Common myeloid progenitor, CD34-positive (primary cell): ENCODE measurements at regions of chr16 and their contacts with region 1.

Region 1: DNA sequence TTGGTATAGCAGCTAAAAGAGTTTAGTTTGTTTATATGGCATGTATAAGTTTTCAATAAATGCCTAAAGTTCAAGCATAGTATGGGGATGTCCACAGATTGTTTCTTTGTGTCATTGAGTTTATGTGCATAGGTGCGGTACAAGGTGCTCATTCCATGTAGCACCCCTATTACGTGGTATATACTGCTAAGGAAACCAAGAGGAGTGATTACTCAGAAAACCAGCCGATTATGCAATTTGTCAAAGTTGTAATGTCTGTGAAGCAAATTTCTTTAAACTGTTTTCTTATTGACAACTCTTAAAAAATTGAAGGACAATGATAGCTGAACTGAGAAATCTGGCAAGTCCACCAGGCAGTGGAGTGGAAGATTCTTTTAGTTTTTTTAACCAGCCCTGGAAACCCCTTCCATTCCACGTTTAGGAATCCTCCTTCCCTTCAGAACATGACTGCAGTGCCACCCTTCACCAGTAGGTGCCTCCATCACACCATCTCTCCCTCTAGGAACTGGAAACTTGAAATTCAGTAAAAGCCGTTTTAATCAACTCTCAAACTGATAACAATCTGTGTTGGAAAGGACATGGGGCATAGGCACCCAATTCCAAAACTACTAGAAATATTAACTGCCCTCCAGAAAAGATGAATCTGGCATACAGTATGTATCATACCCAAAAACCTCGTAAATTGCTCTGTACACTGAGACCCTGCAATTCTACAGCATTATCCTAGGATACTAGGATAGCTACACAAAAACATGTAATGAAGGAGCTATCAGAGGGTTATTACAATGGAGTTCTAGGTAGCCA is 43.5 kb downstream of the REXO5 start:
- DNase-seq: peak; percentile 62 to 71 (median 63)
- H3K4me3 ChIP-seq: no peak overlapping the region
- H3K27ac ChIP-seq: no peak overlapping the region
- H3K4me1 ChIP-seq: peaks cover 8 to 71% (median 38%) of the 10 kb centered on the region in 4 experiments
- H3K27me3 ChIP-seq: no peaks in the 10 kb centered on the region

Region 2: DNA sequence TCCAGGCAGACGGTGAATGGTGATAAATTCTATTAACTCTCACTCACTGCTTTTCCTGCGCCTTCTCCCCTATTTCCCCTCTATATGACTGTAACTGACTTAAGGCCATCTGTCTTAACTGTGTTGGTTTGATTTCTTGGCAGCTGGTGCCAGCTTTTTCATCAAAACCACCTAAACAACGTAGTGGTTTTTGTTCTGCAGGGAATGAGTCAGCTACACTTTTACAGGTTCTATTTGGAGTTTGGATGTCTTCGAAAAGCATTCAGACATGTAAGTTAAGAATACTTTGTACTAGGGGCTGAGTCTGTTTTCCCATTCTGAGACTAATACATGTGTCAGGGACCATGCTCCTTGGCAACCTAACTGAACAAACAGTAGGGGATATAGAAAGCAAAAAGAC is 35.0 kb before region 1 on chr16:
- CTCF ChIA-PET with region 1: interaction called, 41 read pairs
- POLR2A ChIA-PET with region 1: no interaction called
- DNase-seq: peak; percentile 67 to 96 (median 94)
- H3K4me3 ChIP-seq: peak overlapping the region in 2 of 7 experiments; percentile 43
- H3K27ac ChIP-seq: peak overlapping the region in 1 of 2 experiments; percentile 23
- H3K4me1 ChIP-seq: peaks cover 8 to 58% (median 30%) of the 10 kb centered on the region in 4 experiments
- H3K27me3 ChIP-seq: no peaks in the 10 kb centered on the region

Region 3: DNA sequence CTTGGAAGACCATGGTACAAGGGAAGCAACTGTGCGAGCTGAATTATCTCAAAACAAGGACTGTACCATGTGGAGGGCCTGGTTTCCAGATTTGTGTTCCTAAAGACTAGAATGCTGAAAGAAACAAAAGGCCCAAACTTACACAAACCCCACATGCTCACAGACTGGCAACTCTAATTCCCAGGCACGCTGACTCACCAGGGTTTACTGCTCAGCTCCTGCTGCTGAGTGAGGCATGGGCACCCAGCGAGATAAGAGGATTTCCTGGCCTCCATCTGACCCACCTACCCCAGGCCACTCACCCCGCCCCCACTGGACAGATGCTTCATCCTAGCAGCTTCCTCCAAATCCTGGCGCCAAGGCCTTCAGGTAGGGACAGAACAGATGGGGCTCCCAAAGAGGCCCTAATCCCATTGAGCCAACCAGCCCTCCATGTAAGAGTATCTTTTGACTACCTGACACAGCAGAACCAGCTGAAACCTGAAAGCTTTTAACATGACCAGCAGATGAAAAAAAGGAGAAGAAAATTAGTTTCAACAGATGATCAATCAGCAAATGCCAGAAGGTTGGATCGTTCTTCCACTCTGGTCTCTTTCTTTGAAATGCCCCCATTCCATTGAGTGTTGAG is 16.5 kb after region 1 on chr16:
- CTCF ChIA-PET with region 1: interaction called, 14 read pairs
- POLR2A ChIA-PET with region 1: interaction called, 3 read pairs
- DNase-seq: peak in 2 of 3 donors; percentile 41 to 55
- H3K4me3 ChIP-seq: no peak overlapping the region
- H3K27ac ChIP-seq: no peak overlapping the region
- H3K4me1 ChIP-seq: peaks cover 0 to 47% (median 19%) of the 10 kb centered on the region in 4 experiments
- H3K27me3 ChIP-seq: no peaks in the 10 kb centered on the region

Region 4: GRCh38 chr16:20904507-20905079 is 54.8 kb after region 1 on chr16:
- CTCF ChIA-PET with region 1: interaction called, 14 read pairs
- POLR2A ChIA-PET with region 1: no interaction called
- DNase-seq: peak; percentile 93 to 96 (median 95)
- H3K4me3 ChIP-seq: peak overlapping the region in 4 of 7 experiments; percentile 2 to 93 (median 49)
- H3K27ac ChIP-seq: peak overlapping the region in 1 of 2 experiments; percentile 78
- H3K4me1 ChIP-seq: peaks cover 39 to 89% (median 84%) of the 10 kb centered on the region in 4 experiments
- H3K27me3 ChIP-seq: no peaks in the 10 kb centered on the region

Region 5: DNA sequence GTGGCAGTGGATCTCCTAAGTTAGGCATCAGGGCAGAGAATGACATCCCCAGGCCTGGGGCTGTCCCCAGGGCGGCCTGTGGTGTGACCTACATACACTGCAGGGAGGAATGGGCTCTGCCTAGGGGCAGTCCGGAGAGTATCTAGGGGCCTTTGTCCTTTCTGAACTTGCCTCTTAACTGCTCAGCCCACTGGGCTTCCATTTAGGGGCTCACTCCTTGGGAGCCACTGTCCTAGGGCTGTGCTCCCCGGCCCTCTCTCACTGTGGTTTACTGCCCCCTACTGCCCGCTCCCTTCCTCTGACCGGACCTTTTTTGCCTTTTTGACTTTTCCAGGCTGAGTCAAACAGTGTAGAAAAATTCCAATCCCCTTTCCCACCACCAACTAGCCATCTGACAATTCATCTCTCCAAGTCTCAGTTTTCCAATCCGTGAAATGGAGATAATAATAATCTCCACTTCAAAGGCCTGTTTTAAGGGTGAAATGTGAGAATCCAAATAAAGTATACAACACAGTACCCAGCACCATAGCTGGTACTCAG is 234.0 kb after region 1 on chr16:
- CTCF ChIA-PET with region 1: interaction called, 119 read pairs
- POLR2A ChIA-PET with region 1: no interaction called
- DNase-seq: peak; percentile 49 to 59 (median 58)
- H3K4me3 ChIP-seq: no peak overlapping the region
- H3K27ac ChIP-seq: no peak overlapping the region
- H3K4me1 ChIP-seq: peaks cover 0 to 3% (median 0%) of the 10 kb centered on the region in 4 experiments
- H3K27me3 ChIP-seq: no peaks in the 10 kb centered on the region

Region 6: DNA sequence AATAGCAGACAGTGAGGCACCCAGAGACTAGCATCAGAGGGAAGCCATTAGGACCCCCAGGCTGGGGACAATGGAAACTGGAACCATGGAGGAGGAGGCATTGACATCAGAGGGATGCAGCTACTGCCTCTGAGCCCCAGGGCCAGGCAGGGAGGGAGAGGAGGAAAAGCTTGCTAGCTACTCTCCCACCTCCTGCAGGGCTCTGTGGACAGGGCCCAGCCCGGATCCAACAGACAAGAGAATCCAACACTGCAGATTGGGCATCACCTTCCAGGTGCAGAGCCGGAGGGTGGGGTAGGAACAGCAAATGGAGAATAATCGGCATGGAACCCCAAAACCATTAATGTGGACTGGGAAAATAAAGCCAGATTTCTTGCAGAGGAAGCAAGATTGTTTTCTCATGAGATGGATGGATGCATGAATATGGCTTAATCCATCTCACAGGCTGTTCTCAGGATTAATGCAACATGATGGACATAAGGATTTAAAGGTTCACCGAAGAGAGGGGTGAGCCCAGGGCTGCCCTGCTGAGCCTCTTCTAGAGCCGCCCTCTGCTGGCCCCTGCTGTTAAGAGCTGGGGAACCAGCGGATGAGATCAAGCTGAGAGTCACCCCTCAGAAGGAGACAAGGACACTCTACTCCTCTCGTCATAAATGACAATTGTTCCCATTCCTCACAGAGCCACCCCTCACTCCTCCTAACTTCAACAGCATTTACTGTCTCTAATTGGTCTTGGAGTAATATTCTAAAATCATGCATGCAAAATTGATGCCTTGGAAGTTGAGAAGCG is 252.0 kb after region 1 on chr16:
- CTCF ChIA-PET with region 1: interaction called, 41 read pairs
- POLR2A ChIA-PET with region 1: no interaction called
- DNase-seq: peak; percentile 14 to 38 (median 30)
- H3K4me3 ChIP-seq: no peak overlapping the region
- H3K27ac ChIP-seq: no peak overlapping the region
- H3K4me1 ChIP-seq: peaks cover 0 to 13% (median 10%) of the 10 kb centered on the region in 4 experiments
- H3K27me3 ChIP-seq: no peaks in the 10 kb centered on the region